GM10248 (cell line): ENCODE measurements at regions of chr11 and their contacts with region 1.

Region 1: DNA sequence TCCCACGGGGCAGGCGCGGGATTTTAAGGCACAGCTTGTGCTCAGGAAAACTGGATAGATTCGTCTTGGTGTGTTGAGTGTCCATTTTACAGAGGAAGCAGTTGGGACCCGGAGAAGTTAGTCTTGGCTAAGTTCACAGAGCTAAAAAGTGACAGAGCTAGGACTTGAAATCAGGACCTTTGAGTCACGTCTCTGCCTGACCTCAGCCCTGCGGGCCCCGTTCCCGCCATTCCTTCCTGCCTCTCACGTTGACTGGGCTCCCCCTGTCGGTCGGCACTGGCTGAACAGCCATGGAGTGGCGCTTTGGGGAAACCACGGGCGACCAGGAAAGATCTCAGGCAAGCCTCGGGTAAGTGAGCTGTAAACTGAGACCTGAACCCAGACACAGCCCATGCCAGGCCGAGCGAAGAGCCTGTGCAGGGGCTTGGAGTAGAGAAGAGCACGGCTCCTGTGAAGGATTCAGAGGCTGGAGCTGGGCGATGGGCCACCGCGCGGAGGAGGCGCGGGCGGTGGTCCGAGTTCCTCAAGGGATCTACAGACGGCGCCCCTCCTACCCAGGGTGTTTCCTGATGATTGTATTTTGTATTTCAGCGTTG is 54.1 kb downstream of the WNT11 start:
- DNase-seq: peak; percentile 91
- CTCF ChIP-seq: peak; percentile 99

Region 2: GRCh38 chr11:75142714-75143419 is 1009.3 kb before region 1 on chr11:
- CTCF ChIA-PET with region 1: no interaction called
- POLR2A ChIA-PET with region 1: no interaction called
- DNase-seq: peak; percentile 68
- CTCF ChIP-seq: peak; percentile 6

Region 3: DNA sequence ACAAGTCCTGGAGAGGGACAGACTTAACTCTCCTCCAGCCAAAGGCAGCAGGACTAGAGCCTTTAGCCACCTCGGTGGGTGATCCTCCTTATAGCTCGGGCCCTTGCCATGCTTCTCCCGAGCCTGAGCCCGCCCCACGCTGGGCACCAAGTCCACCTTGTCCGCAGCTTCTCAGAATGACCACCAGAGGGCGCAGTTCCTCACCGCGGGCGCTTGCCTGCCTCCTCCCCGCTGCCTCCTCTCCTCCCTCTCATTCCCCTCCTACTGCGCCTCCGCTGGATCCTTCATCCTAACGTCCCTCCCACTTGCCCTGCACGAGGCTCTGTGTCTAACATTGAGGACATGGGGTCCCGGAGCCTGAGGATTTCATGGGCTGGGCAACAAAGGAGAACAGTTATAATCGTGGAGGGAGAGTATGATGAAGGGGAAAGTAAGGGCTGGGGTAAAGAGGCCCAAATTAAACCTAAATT is 445.9 kb before region 1 on chr11:
- CTCF ChIA-PET with region 1: interaction called, 14 read pairs
- POLR2A ChIA-PET with region 1: no interaction called
- DNase-seq: peak; percentile 85
- CTCF ChIP-seq: peak; percentile 92

Region 4: DNA sequence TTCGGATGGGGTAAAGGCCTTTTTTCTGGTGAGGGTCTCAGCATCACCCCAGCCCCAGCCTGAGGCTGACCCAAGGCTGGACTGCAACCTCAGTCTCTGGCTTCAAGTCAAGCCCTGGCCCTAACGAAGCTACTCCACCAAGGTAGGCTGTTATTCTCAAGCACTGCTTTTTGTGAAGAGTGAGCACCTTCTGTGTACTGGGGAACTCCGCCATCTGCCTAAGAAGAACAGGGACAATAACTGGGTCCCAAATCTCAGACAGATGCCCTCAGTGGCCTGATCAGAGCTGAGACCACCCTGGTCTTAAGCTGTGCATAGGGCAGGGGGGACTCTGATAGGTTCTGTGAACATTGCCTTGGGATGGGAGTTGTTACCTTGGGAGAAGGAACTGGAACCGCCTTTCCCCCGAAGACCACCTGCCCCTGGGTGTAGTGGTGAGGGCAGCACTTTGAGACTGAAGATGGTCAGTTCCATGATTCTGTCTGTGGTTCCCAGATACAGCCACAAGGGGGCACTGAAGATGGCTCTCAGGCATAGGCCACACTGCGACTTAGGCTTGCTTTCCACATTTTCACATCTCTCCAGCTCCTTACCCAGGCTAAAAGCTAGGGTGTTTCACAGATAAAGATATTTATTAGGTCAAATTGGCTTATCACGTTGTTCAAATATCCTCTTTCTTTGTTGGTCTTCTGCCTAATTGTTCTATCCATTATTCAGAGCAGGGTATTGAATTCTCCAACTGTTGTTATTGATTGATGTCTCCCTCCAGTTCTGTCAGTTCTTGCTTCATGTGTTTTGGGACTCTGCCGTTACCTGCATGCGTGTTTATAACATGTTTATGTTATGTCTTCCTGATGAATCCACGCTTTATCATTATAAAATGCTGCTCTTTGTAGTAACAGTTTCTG is 349.0 kb before region 1 on chr11:
- CTCF ChIA-PET with region 1: interaction called, 34 read pairs
- POLR2A ChIA-PET with region 1: no interaction called
- DNase-seq: peak; percentile 81
- CTCF ChIP-seq: peak; percentile 88

Region 5: DNA sequence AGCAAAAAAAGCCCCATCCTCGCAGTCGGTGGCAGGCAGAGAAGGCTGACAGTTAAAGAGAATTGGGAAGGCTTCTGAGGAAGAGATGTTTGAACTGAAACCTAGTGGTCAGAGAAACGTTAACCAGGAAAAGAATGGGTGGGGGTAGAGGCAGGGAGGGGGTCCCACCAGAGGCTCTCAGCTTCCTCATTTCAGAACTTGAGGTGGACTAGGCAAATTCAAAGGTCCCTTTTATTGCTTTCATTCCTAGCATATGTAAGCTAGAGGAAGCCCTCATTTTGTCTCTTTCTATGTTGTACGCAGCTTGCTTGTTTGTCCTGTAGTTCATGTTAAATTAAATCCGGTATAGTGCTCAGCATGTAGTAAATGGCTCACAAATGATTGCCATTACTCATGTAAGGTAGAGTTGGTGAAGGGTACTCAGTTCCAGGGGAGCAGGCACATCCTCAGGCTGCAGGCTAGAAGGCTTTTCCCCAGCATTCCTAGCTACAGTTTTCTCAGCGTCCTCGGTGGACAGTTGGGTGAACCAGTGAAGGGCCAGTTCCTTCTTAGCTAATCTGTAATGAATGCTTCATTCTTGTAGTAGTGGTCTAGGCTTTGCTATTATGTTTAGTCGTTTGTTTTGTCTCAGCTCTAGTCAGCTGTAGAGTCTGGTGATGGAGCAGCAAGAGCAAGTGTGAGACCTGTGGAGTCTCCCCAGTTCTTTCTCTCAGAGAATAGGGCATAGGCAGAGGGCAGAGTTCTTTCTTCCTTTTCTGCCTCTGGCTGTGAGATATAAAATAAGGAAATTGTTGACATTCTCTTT is 278.6 kb before region 1 on chr11:
- CTCF ChIA-PET with region 1: interaction called, 13 read pairs
- POLR2A ChIA-PET with region 1: no interaction called
- DNase-seq: peak; percentile 52
- CTCF ChIP-seq: no peak

Region 6: DNA sequence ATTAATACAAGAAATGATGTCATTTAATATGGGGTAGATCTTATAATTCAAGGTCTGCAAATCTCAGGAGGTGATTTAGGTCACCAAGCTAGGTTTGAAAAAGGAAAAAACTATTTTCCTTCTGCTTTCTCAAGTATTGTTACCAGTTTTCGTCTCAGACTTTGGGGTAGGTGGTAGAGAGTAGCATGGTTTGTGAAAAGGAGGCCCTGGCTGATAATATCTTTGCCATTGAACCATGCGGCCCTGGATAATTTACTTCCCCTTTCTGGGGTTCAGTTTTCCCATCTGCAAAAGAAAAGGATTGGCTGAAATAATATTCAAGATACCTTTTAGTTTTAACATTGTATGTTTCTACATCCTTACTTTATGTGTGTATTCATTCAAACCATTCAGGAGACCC is 37.9 kb before region 1 on chr11:
- CTCF ChIA-PET with region 1: interaction called, 23 read pairs
- POLR2A ChIA-PET with region 1: no interaction called
- DNase-seq: no peak
- CTCF ChIP-seq: no peak

Region 7: DNA sequence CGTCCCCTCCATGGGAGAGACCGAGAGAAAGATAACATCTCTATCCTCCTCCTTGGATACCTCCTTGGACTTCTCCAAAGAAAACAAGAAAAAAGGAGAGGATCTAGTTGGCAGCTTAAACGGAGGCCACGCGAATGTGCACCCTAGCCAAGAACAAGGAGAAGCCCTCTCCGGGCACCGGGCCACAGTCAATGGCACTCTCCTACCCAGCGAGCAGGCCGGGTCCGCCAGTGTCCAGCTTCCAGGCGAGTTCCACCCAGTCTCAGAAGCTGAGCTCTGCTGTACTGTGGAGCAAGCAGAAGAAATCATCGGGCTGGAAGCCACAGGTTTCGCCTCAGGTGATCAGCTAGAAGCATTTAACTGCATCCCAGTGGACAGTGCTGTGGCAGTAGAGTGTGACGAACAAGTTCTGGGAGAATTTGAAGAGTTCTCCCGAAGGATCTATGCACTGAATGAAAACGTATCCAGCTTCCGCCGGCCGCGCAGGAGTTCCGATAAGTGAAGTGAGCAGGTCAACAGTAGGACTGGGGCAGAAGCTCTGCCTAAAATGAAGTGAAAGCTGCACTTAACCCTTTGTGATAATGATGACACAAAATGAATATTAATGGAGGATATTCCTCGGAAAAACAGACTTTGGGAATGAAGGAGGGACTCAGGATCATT is 11.1 kb before region 1 on chr11:
- CTCF ChIA-PET with region 1: interaction called, 65 read pairs
- POLR2A ChIA-PET with region 1: no interaction called
- DNase-seq: no peak
- CTCF ChIP-seq: no peak

Region 8: DNA sequence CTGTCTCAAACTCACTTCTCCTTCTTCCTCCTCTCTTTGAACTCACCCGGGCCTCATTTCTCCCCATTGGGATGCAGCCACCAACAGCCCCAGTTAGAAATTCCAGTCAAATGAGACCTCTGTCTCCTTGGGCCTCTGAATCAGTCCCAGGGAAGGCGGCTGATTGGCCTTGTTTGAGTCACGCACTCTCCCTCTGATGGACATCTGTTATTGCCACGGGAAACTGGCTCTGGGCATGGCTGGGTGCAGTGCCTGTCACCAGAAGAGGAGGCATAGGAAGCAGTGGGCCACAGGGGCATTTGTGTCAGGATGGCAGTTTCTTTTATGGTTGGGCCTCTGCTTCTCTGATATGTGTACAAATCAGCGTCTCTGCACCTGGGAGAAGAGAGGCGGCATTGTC is 63.8 kb after region 1 on chr11:
- CTCF ChIA-PET with region 1: no interaction called
- POLR2A ChIA-PET with region 1: no interaction called
- DNase-seq: no peak
- CTCF ChIP-seq: no peak